GM12878 (cell line): ENCODE measurements at regions of chr3 and their contacts with region 1.

Region 1: GRCh38 chr3:185585859-185586685 is at the start of gene SENP2:
- DNase-seq: peak; percentile 97
- ATAC-seq: peak; percentile 99
- H3K4me3 ChIP-seq: peak within 1 kb of the TSS; percentile 90
- H3K27ac ChIP-seq: peak within 1 kb of the TSS; percentile 87
- H3K4me1 ChIP-seq: peaks cover 18% of the 10 kb centered on the region
- H3K27me3 ChIP-seq: no peaks in the 10 kb centered on the region
- CTCF ChIP-seq: no peak
- EP300 ChIP-seq: peak in 1 of 2 experiments; percentile 59; a peak in 1 of 4 replicates
- POLR2A ChIP-seq: peak; percentile 93
- RAD21 ChIP-seq: no peak
- polyA plus RNA-seq, gene SENP2: 9.0 to 9.7 TPM

Region 2: GRCh38 chr3:184842433-184842832 is 743.6 kb before region 1 on chr3:
- CTCF ChIA-PET with region 1: no interaction called
- POLR2A ChIA-PET with region 1: no interaction called
- RAD21 ChIA-PET with region 1: no interaction called
- SMC1A ChIA-PET with region 1: no interaction called
- in situ Hi-C with region 1: no loop called
- intact Hi-C with region 1: no loop called
- DNase-seq: no peak
- ATAC-seq: no peak
- H3K4me3 ChIP-seq: no peak overlapping the region
- H3K27ac ChIP-seq: no peak overlapping the region
- H3K4me1 ChIP-seq: no peaks in the 10 kb centered on the region
- H3K27me3 ChIP-seq: no peaks in the 10 kb centered on the region
- CTCF ChIP-seq: no peak
- EP300 ChIP-seq: no peak
- POLR2A ChIP-seq: no peak
- RAD21 ChIP-seq: no peak

Region 3: GRCh38 chr3:185457302-185457701 is 128.8 kb before region 1 on chr3:
- CTCF ChIA-PET with region 1: no interaction called
- POLR2A ChIA-PET with region 1: no interaction called
- RAD21 ChIA-PET with region 1: no interaction called
- SMC1A ChIA-PET with region 1: no interaction called
- in situ Hi-C with region 1: no loop called
- intact Hi-C with region 1: no loop called
- DNase-seq: no peak
- ATAC-seq: no peak
- H3K4me3 ChIP-seq: no peak overlapping the region
- H3K27ac ChIP-seq: no peak overlapping the region
- H3K4me1 ChIP-seq: no peaks in the 10 kb centered on the region
- H3K27me3 ChIP-seq: no peaks in the 10 kb centered on the region
- CTCF ChIP-seq: no peak
- EP300 ChIP-seq: no peak
- POLR2A ChIP-seq: no peak
- RAD21 ChIP-seq: no peak

Region 4: GRCh38 chr3:185552358-185552877 is 33.7 kb before region 1 on chr3 and contains the start of gene LIPH:
- CTCF ChIA-PET with region 1: no interaction called
- POLR2A ChIA-PET with region 1: interaction called, 17 read pairs
- RAD21 ChIA-PET with region 1: no interaction called
- SMC1A ChIA-PET with region 1: no interaction called
- in situ Hi-C with region 1: no loop called
- intact Hi-C with region 1: no loop called
- DNase-seq: peak; percentile 61
- ATAC-seq: peak; percentile 81
- H3K4me3 ChIP-seq: peak within 1 kb of the TSS; percentile 65
- H3K27ac ChIP-seq: peak within 1 kb of the TSS; percentile 68
- H3K4me1 ChIP-seq: peaks cover 17% of the 10 kb centered on the region
- H3K27me3 ChIP-seq: no peaks in the 10 kb centered on the region
- CTCF ChIP-seq: no peak
- EP300 ChIP-seq: peak in 1 of 2 experiments; percentile 37; a peak in 1 of 4 replicates
- POLR2A ChIP-seq: no peak
- RAD21 ChIP-seq: no peak
- polyA plus RNA-seq, gene LIPH: 2.2 to 4.7 TPM

Region 5: GRCh38 chr3:185631508-185632206 is 45.6 kb after region 1 on chr3:
- CTCF ChIA-PET with region 1: no interaction called
- POLR2A ChIA-PET with region 1: interaction called, 10 read pairs
- RAD21 ChIA-PET with region 1: interaction called, 4 read pairs
- SMC1A ChIA-PET with region 1: no interaction called
- in situ Hi-C with region 1: no loop called
- intact Hi-C with region 1: no loop called
- DNase-seq: no peak
- ATAC-seq: no peak
- H3K4me3 ChIP-seq: no peak overlapping the region
- H3K27ac ChIP-seq: no peak overlapping the region
- H3K4me1 ChIP-seq: no peaks in the 10 kb centered on the region
- H3K27me3 ChIP-seq: no peaks in the 10 kb centered on the region
- CTCF ChIP-seq: no peak
- EP300 ChIP-seq: no peak
- POLR2A ChIP-seq: no peak
- RAD21 ChIP-seq: no peak